MCF 10A (cell line): ENCODE measurements at regions of chr4 and their contacts with region 1.

Region 1: GRCh38 chr4:17347445-17347844 is 164.4 kb downstream of the QDPR start:
- DNase-seq: peak; percentile 70
- H3K4me3 Mint-ChIP-seq: no peak overlapping the region
- H3K27ac Mint-ChIP-seq: no peak overlapping the region
- H3K4me1 Mint-ChIP-seq: no peaks in the 10 kb centered on the region
- H3K27me3 Mint-ChIP-seq: no peaks in the 10 kb centered on the region
- CTCF ChIP-seq: peak; percentile 58

Region 2: GRCh38 chr4:16820329-16820728 is 527.1 kb before region 1 on chr4:
- CTCF ChIA-PET with region 1: no interaction called
- POLR2A ChIA-PET with region 1: no interaction called
- intact Hi-C with region 1: no loop called
- DNase-seq: no peak
- H3K4me3 Mint-ChIP-seq: no peak overlapping the region
- H3K27ac Mint-ChIP-seq: no peak overlapping the region
- H3K4me1 Mint-ChIP-seq: peaks cover 5% of the 10 kb centered on the region
- H3K27me3 Mint-ChIP-seq: peaks cover 57% of the 10 kb centered on the region
- CTCF ChIP-seq: no peak

Region 3: DNA sequence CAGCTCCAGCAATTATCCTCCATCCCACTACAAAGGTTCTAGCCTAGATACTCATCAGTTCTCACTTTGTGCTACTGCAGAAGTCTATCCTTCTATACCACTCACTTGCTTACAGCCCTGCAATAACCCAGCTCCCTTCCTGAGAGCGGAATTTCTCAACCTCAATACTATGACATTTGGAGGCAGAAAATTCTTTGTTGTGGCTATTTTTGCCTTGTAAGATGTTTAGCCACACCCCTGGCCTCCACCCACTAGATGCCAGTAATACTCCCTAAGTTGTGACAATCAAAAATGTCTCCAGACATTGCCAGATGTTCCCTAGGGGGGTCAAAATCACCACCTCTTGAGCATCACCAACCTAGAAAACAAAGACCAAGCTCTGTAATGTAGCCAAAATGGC is 15.0 kb after region 1 on chr4:
- CTCF ChIA-PET with region 1: interaction called, 28 read pairs
- POLR2A ChIA-PET with region 1: no interaction called
- intact Hi-C with region 1: no loop called
- DNase-seq: no peak
- H3K4me3 Mint-ChIP-seq: no peak overlapping the region
- H3K27ac Mint-ChIP-seq: no peak overlapping the region
- H3K4me1 Mint-ChIP-seq: no peaks in the 10 kb centered on the region
- H3K27me3 Mint-ChIP-seq: peaks cover 19% of the 10 kb centered on the region
- CTCF ChIP-seq: no peak

Region 4: DNA sequence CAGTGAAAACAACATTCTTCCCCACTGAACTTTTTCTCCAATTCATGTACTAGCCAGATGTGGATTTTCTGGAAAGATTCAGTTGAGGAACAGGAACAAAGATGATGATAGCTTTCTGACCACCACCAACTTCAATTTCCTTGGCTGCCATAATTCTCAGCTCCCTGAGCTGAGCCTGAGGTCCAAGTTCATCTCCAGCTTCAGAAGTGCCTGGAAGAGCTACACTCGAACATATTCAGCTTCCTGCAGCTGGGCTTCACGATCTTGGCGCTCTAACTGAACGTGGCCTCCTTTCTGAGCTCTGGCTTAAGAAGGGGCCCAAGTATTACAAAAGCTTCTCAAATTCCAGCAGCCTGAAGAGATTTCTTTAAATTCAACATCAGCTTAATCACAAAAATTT is 80.5 kb after region 1 on chr4:
- CTCF ChIA-PET with region 1: interaction called, 10 read pairs
- POLR2A ChIA-PET with region 1: interaction called, 3 read pairs
- intact Hi-C with region 1: no loop called
- DNase-seq: no peak
- H3K4me3 Mint-ChIP-seq: no peak overlapping the region
- H3K27ac Mint-ChIP-seq: no peak overlapping the region
- H3K4me1 Mint-ChIP-seq: no peaks in the 10 kb centered on the region
- H3K27me3 Mint-ChIP-seq: no peaks in the 10 kb centered on the region
- CTCF ChIP-seq: no peak

Region 5: GRCh38 chr4:17436750-17437090 is 89.3 kb after region 1 on chr4:
- CTCF ChIA-PET with region 1: interaction called, 11 read pairs
- POLR2A ChIA-PET with region 1: no interaction called
- intact Hi-C with region 1: no loop called
- DNase-seq: no peak
- H3K4me3 Mint-ChIP-seq: no peak overlapping the region
- H3K27ac Mint-ChIP-seq: no peak overlapping the region
- H3K4me1 Mint-ChIP-seq: no peaks in the 10 kb centered on the region
- H3K27me3 Mint-ChIP-seq: no peaks in the 10 kb centered on the region
- CTCF ChIP-seq: no peak

Region 6: GRCh38 chr4:17468371-17469221 is 121.2 kb after region 1 on chr4:
- CTCF ChIA-PET with region 1: interaction called, 20 read pairs
- POLR2A ChIA-PET with region 1: no interaction called
- intact Hi-C with region 1: loop called (anchors 1 kb)
- DNase-seq: peak; percentile 56
- H3K4me3 Mint-ChIP-seq: no peak overlapping the region
- H3K27ac Mint-ChIP-seq: no peak overlapping the region
- H3K4me1 Mint-ChIP-seq: no peaks in the 10 kb centered on the region
- H3K27me3 Mint-ChIP-seq: no peaks in the 10 kb centered on the region
- CTCF ChIP-seq: peak; percentile 50

Region 7: DNA sequence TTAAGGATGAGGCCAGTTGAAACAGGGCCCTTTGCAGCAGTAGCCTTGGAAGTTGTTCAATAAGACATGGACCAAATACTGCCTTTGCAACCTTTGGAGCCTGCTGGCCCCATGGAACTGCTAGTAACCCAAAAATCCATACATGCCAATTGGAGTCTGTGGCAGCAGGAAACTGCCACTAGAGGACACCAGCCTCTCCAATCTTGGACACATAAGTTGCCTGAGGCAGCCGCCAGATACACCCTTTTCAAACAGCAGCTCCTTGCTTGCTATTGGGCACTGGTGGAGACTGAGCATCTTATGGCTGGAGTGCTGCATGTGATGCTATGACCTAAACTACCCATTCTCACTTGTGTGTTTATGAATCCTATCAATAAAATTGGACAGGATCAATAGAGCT is 214.7 kb after region 1 on chr4:
- CTCF ChIA-PET with region 1: no interaction called
- POLR2A ChIA-PET with region 1: no interaction called
- intact Hi-C with region 1: no loop called
- DNase-seq: no peak
- H3K4me3 Mint-ChIP-seq: no peak overlapping the region
- H3K27ac Mint-ChIP-seq: no peak overlapping the region
- H3K4me1 Mint-ChIP-seq: peaks cover 6% of the 10 kb centered on the region
- H3K27me3 Mint-ChIP-seq: no peaks in the 10 kb centered on the region
- CTCF ChIP-seq: no peak